Tibial artery (tissue), 4 donors: ENCODE measurements at regions of chr10 and their contacts with region 1.

Region 1: GRCh38 chr10:71383972-71384687 is 12.6 kb upstream of the CDH23 start:
- DNase-seq: peak; percentile 55 to 83
- H3K4me3 ChIP-seq: no peak overlapping the region
- H3K27ac ChIP-seq: no peak overlapping the region
- H3K4me1 ChIP-seq: no peaks in the 10 kb centered on the region
- H3K27me3 ChIP-seq: peaks cover 0 to 3% of the 10 kb centered on the region in 2 donors
- CTCF ChIP-seq: peak; percentile 89 to 91

Region 2: DNA sequence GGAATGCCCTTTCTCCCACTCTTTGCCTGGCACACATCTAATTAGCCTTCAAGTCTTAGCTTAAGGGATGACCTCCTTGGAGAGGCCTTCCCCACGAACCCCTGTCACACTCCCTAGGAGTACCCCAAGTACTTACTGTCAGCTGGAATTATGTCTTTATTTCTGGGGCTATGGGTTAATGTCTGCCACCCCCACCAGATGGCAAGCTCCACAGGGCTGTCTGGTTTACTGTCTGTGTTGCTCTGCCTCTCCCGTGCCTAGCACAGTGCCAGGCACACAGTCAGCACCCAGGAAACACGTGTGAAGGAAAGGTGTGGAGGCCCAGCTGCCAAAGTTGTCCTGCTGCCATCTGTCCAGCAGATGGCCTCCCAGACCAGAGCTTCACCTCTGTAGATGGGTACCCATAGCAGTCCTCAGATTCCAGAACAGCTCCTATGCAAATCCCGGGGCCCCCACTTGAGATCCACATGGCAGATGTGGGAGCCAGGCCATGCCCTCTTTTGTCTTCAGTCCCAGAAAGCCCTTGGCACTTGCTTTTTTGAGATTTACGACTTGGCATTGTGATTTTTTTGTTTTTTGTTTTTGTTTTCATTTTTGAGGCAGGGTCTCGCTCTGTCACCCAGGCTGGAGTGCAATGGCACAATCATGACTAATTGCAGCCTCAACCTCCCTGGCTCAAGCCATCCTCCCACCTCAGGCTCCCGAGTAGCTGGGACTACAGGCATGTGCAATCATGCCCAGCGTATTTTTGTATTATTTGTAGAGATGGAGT is 922.7 kb before region 1 on chr10:
- intact Hi-C with region 1: no loop called
- DNase-seq: peak in 1 of 2 donors; percentile 54
- H3K4me3 ChIP-seq: no peak overlapping the region
- H3K27ac ChIP-seq: peak overlapping the region; percentile 41 to 89
- H3K4me1 ChIP-seq: peaks cover 0 to 51% (median 41%) of the 10 kb centered on the region in 4 donors
- H3K27me3 ChIP-seq: no peaks in the 10 kb centered on the region
- CTCF ChIP-seq: peak; percentile 88 to 89

Region 3: DNA sequence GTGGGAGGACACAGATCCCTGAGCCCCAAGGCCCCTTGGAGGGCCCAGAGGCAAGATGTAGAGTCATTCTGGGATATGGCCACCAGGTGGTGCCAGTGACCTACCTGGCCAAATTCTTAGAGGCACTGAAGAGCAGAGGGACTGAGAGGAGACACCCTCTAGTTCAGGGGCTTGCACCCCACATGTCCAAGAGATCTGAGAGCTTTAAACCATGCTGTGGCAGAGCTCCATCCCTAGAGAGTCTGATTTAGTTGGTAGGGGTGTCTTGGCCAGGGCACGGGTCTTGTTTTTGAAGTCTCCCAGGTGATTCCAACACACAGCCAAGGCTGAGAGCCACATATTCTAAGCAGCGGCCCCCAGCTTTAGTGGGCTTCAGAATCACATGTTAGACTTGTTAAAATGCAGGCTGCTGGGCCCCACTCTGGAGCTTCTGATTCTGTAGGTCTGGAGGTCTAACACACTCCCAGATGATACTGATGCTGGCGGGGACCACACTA is 834.1 kb before region 1 on chr10:
- intact Hi-C with region 1: no loop called
- DNase-seq: peak; percentile 65 to 76
- H3K4me3 ChIP-seq: no peak overlapping the region
- H3K27ac ChIP-seq: no peak overlapping the region
- H3K4me1 ChIP-seq: peaks cover 0 to 9% (median 5%) of the 10 kb centered on the region in 4 donors
- H3K27me3 ChIP-seq: no peaks in the 10 kb centered on the region
- CTCF ChIP-seq: peak; percentile 88 to 90

Region 4: GRCh38 chr10:71569775-71570588 is 185.9 kb after region 1 on chr10:
- intact Hi-C with region 1: loop called (anchors 5 kb)
- DNase-seq: peak; percentile 75 to 82
- H3K4me3 ChIP-seq: no peak overlapping the region
- H3K27ac ChIP-seq: no peak overlapping the region
- H3K4me1 ChIP-seq: no peaks in the 10 kb centered on the region
- H3K27me3 ChIP-seq: peaks cover 0 to 12% of the 10 kb centered on the region in 2 donors
- CTCF ChIP-seq: peak; percentile 75 to 84

Region 5: GRCh38 chr10:71708301-71708703 is 324.2 kb after region 1 on chr10:
- intact Hi-C with region 1: loop called (anchors 5 kb)
- DNase-seq: no peak
- H3K4me3 ChIP-seq: no peak overlapping the region
- H3K27ac ChIP-seq: no peak overlapping the region
- H3K4me1 ChIP-seq: peaks cover 0 to 8% (median 8%) of the 10 kb centered on the region in 4 donors
- H3K27me3 ChIP-seq: no peaks in the 10 kb centered on the region
- CTCF ChIP-seq: peak; percentile 63 to 65

Region 6: DNA sequence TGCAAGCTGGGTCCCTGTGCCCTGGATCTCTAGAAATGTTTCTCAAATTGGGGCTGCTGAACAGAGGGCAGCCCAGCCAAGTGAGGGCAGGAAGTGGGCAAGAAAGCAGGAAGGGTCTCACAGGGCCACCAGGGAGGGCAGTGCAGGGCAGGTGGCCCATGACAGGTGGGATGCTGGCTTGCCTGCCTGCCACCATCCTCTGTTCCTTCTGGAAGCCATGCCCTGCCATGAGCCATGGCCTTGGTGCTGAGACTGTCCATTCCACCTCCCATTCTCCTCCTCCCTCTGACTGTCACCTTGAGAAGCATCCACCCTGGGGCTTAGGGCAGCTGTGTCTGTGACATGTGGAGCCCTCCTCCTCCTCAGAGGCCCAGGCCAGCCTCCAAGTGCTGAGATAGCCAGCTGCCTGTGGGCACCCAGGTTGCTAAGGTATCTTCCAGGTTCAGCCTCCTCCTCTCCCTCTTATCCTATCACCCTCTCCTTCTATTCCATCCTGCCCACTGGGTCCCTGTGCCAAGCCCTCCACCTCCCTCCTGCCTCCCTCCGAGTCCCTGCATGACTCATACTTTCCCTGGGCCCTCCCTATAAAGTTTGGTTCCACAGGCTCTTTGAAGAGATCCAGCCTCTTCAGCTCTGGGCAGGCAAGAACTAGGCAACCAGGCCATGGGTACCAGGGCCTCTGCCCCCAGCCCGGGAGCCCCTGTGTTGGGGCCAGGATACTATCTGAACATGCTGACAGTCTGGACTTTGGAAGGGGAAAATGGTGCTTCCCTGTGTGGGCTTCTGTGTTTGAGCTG is 387.9 kb after region 1 on chr10:
- intact Hi-C with region 1: loop called (anchors 10 kb)
- DNase-seq: peak; percentile 84 to 93
- H3K4me3 ChIP-seq: peak overlapping the region; percentile 80 to 82
- H3K27ac ChIP-seq: peak overlapping the region; percentile 95 to 96
- H3K4me1 ChIP-seq: peaks cover 10 to 71% (median 62%) of the 10 kb centered on the region in 4 donors
- H3K27me3 ChIP-seq: no peaks in the 10 kb centered on the region
- CTCF ChIP-seq: no peak